Activated T-helper 2 cell treated with anti-CD3 and anti-CD28 coated beads, Interferon-gamma antibody, Interleukin-2, Interleukin-4, amounts not matched to agents 10 μg/mL and 5 μg/mL and 100 μg/mL, durations not matched to agents 14 hours and 24 hours and 36 hours (primary cell): ENCODE measurements at regions of chr10 and their contacts with region 1.

Region 1: DNA sequence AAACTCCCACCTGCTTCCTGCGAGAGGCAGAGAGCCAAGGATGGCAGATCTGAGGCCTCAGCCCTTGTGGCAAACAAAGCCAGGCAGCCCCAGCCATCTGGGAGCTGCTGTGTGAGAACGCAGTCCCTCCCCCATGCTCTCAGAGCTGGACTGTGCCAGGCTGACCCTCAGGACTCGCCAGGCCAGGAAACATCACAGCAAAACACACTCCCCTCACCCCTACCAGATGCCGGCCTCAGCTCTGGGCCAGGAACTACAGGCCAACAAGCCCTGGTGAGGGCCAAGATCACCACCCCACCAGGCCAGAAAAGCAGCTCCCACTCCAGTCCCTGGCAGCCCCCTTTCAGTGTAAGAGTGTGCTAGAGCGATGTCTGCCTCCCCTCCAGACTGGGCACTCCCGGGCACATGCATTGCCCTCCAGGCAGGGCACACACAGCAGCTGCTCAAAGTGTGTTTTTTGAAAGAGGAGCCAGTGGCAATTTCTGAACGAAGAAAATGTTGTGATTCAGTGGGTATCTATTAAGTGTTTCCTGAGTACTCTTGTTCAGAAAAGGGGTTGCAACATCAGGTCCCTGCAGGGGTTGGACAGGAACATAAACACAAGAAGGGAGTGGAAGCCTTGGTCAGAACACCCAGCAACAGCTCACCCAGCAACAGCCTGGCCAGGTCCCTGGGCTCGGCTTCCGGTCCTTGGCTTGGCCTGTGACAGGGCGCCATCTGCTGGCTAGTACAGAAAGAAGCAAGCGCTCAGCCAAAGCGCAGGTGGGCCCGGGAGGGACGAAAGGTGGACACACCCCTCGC is 18.3 kb downstream of the LRRC20 start:
- DNase-seq: peak; percentile 77
- H3K4me3 Mint-ChIP-seq: no peak overlapping the region
- H3K27ac Mint-ChIP-seq: no peak overlapping the region
- H3K4me1 Mint-ChIP-seq: peaks cover 8% of the 10 kb centered on the region
- H3K27me3 Mint-ChIP-seq: no peaks in the 10 kb centered on the region

Region 2: DNA sequence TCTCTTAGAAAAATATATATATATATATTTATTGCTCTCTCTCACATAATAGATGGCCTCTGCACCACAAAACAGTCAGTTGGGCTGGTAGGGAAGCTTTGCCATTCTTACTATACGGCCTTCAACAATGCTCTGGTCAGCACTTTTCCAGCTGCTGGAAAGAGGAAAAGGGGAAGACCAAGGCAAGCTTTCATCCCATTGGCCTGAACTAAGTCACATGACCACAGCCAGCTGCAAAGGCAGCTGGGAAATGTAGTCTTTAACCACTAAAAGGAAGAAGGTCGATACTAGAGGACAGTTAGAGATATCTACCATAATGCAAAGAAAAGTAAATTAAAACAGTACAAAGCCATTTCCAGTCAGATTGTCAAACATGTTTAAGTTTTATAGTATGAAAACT is 369.9 kb before region 1 on chr10:
- intact Hi-C with region 1: no loop called
- DNase-seq: no peak
- H3K4me3 Mint-ChIP-seq: no peak overlapping the region
- H3K27ac Mint-ChIP-seq: no peak overlapping the region
- H3K4me1 Mint-ChIP-seq: no peaks in the 10 kb centered on the region
- H3K27me3 Mint-ChIP-seq: peaks cover 24% of the 10 kb centered on the region

Region 3: GRCh38 chr10:70221030-70221429 is 143.1 kb before region 1 on chr10:
- intact Hi-C with region 1: loop called (anchors 1 kb)
- DNase-seq: no peak
- H3K4me3 Mint-ChIP-seq: peak overlapping the region; percentile 60
- H3K27ac Mint-ChIP-seq: no peak overlapping the region
- H3K4me1 Mint-ChIP-seq: peaks cover 32% of the 10 kb centered on the region
- H3K27me3 Mint-ChIP-seq: no peaks in the 10 kb centered on the region